ENCODE measurements at regions of chr10 and their contacts with region 1.

Region 1: DNA sequence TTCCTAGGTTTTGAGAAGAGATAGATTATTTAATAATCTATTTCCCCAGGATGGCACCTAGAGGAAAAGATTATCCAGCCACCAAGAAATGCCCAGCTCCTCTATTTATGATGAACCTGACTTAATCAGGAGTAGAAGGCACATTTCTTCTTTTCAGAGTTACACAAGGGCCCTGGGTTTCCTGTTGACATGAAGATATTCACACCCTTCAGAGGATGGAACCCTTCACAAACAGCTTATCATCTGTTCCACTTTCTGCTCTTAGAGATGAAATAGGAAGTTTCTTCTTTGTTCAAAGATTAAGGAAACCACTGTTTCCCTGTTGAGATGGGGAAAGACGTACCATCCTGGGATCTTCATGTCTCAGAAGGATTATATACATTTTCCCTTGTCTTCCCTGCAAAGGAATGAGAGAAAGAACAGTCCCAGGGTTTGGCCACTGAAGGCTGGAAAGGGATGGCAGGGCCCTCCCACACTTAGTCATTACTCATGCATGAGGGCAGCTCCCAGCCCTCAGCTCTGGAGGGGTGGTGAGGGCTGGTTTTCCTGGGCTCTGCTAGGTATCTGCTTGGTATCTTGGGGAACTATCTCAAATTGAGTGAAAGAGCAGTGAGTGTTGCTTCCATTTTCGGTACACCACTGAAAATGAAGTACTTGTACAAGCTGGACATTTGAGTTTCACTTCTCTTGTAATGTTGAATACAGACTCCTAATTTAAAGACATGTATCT is 64.0 kb downstream of the MTPAP start:
- DNase-seq: no peak
- H3K4me3 ChIP-seq: no peak overlapping the region
- CTCF ChIP-seq: no peak

Region 2: DNA sequence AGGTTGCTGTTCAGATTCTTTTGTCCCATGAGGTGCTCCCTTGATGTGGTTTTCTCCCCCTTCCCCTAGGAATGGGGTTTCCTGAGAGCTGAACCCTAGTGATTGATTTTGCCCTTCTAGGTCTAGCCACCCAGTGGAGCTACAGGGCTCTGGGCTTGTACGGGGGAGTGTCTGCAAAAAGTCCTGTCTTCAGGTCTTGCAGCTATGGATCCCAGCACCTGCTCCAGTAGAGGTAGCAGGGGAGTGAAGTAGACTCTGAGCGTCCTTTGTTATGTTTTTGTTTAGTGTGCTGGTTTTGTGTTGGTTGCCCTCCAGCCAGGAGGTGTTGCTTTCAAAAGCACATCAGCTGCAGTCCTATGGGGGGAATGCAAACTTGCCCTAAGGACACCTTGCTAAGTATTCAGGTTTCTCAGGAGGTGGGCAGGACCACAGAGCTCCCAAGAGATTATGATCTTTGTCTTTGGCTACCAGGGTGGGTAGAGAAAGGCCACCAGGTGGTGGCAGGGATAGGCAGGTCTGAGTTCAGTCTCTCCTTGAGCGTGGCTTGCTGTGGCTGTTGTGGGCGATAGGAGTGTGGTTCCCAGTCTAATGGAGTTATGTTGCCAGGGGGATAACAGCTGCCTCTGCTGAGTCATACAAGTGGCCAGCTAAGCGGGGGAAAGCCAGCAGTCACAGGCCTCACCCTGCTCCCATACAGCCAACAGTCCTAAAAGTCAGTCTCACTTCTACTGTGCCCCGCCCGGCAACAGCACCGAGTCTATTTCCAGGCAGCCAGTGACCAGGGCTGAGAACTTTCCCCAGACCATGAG is 133.2 kb before region 1 on chr10:
- CTCF ChIA-PET with region 1: no interaction called
- POLR2A ChIA-PET with region 1: no interaction called
- DNase-seq: peak; percentile 56
- H3K4me3 ChIP-seq: no peak overlapping the region
- CTCF ChIP-seq: no peak

Region 3: GRCh38 chr10:30270247-30270646 is 14.8 kb before region 1 on chr10:
- CTCF ChIA-PET with region 1: interaction called, 13 read pairs
- POLR2A ChIA-PET with region 1: no interaction called
- DNase-seq: no peak
- H3K4me3 ChIP-seq: no peak overlapping the region
- CTCF ChIP-seq: no peak

Region 4: DNA sequence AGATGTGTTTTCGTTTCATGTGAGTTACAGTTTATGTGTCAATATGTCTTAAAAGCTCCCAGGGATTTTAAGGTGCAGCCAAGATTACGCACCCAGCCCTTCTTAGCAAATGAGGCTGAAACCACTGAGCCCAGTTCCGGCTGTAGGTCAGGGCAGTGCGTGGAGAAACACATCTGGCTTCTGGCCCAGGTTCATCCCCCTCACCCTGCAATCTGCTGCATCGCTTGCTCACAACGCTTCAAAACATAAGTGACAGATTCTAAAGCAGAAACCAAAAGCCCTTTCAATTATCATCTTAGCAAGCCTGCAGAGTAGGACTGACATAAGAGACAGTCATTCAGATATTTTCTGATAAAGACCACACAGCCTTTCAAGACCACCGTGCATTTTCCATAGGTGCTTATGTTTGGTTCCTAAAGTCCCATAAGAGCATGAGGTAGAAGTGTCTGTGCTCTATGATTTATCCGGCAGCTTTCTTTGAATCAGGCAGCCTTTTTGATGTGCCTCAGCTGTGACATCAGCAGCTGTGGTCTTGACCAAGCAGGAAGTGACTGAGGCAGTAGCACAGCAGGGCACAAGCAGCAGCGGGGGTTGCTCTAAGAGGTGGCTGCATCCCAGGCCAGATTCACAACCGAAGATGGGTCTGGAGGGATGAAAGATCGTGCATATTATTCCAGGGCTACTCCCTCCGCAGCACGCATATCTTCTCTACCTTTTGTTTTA is 416.6 kb after region 1 on chr10:
- CTCF ChIA-PET with region 1: no interaction called
- POLR2A ChIA-PET with region 1: no interaction called
- DNase-seq: no peak
- H3K4me3 ChIP-seq: no peak overlapping the region
- CTCF ChIP-seq: no peak

Measured in AG04449 (cell line).